ENCODE measurements at regions of chr16 and their contacts with region 1.

Region 1: DNA sequence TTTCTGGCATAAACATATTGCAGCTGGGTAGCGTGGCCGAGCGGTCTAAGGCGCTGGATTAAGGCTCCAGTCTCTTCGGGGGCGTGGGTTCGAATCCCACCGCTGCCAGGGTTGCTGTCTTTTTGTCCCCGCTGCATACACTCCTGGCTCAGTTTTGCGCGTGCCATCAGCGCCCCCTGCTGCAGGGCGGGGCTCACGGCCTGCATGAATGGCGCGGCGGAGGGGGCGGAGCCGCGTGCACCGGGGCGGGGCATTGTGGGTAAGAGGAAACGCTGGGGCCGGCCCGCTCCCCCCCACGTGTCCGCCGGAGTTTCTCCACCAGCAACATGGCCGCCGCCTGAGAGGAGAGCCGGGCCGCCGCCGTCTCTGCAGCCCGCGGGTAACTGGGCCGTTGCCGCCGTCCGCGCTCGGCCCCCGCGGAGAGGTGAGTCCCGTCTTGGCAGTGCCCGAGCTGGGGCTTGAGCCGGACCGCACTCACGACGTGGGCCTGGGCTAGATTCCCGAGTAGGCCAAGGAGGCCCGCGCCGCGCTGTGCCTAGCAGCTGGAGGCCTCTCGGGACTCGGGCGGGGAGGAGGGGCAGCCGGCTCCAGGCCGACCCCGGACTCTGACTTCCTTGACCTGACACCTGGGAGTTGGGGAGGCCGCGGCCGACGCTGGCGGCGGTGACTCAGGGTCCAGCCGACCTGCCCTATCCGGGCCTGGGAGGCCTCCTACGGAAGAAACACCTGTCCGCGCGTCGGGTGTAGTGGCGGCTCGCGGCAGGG is at the start of gene POLR3E:
- ATAC-seq: peak; percentile 71 to 86 (median 82)
- H3K4me3 ChIP-seq: peak within 1 kb of the TSS; percentile 54 to 86 (median 68)
- H3K27ac ChIP-seq: peak within 1 kb of the TSS; percentile 91 to 97
- H3K4me1 ChIP-seq: peaks cover 8 to 9% of the 10 kb centered on the region in 2 donors
- total RNA-seq, gene POLR3E: 20.0 to 65.8 (median 39.4) TPM

Region 2: GRCh38 chr16:22206013-22206841 is 91.1 kb before region 1 on chr16 and contains the start of gene EEF2K:
- in situ Hi-C with region 1: loop called in 4 of 9 experiments (anchors 10 kb)
- ATAC-seq: peak; percentile 83 to 94 (median 92)
- H3K4me3 ChIP-seq: peak within 1 kb of the TSS; percentile 56 to 90 (median 77)
- H3K27ac ChIP-seq: peak within 1 kb of the TSS; percentile 60 to 71
- H3K4me1 ChIP-seq: peaks cover 4 to 7% of the 10 kb centered on the region in 2 donors
- total RNA-seq, gene EEF2K: 4.6 to 22.4 (median 8.9) TPM

Region 3: DNA sequence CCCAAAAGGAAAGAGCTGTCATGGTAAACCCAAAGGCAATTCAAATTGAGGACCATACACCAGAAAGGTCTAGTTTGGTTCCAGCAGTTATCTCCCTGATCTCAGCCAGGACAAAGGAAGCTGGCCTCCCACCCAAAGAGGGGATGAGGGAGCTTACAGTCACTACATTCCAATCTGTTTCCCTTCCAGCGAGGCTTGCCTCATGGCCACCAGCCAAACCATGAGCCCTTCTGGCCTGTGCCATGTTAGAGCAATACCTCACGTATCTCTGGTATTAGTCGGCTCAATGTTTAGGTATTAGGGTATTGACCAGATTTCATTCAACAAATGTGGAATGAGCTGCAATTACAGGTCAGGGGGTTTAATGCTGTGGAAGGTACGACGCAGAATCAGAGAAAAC is 1290.4 kb after region 1 on chr16:
- in situ Hi-C with region 1: no loop called
- ATAC-seq: no peak
- H3K4me3 ChIP-seq: no peak overlapping the region
- H3K27ac ChIP-seq: no peak overlapping the region
- H3K4me1 ChIP-seq: no peaks in the 10 kb centered on the region

Measured in motor neuron (in vitro differentiated cells).